ENCODE measurements at regions of chr3 and their contacts with region 1.

Region 1: GRCh38 chr3:38496131-38496910 is at the start of gene EXOG:
- DNase-seq: peak; percentile 93 to 97 (median 95)
- ATAC-seq: peak; percentile 95
- H3K4me3 ChIP-seq: peak within 1 kb of the TSS; percentile 88 to 96
- H3K4me3 Mint-ChIP-seq: peak within 1 kb of the TSS; percentile 97
- H3K27ac ChIP-seq: peak within 1 kb of the TSS; percentile 66 to 71
- H3K27ac Mint-ChIP-seq: peak within 1 kb of the TSS; percentile 91
- H3K4me1 ChIP-seq: peaks cover 14% of the 10 kb centered on the region
- H3K4me1 Mint-ChIP-seq: peaks cover 32% of the 10 kb centered on the region
- H3K27me3 ChIP-seq: no peaks in the 10 kb centered on the region
- H3K27me3 Mint-ChIP-seq: no peaks in the 10 kb centered on the region
- CTCF ChIP-seq: peak; percentile 92
- total RNA-seq, gene EXOG: 16.5 to 20.1 TPM

Region 2: DNA sequence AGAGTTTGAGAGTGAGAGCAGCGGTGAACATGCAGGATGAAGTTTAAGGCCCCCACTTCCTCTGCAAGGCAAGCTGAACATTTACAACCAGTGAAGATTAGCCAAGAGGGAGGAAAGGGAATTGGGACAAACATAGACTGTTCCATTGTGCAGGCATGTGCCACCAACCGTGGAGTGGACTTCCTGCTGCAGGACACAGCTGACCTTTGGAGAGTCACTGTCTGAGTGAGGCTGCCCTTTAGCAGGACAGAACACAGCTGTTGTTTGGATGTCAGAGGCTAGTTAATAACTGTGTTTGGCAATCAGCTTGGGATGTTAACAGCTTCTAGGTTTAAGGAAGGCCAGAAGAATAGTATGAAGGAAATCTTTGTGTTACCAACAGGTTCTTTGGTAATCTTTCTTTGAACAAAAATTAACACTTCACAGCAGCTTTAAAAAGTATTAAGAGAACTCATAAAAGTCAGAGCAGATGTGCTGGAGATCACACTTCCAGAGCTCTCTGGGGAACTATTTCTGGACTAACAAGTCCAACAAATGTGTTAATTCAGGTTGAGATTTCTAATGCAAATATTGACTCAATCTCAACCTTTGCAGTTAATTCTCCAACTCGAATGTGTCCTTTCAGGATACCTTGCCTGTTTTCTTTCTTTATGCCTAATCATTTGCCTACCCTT is 603.3 kb before region 1 on chr3:
- CTCF ChIA-PET with region 1: no interaction called
- POLR2A ChIA-PET with region 1: no interaction called
- intact Hi-C with region 1: no loop called
- DNase-seq: no peak
- ATAC-seq: no peak
- H3K4me3 ChIP-seq: no peak overlapping the region
- H3K4me3 Mint-ChIP-seq: no peak overlapping the region
- H3K27ac ChIP-seq: no peak overlapping the region
- H3K27ac Mint-ChIP-seq: no peak overlapping the region
- H3K4me1 ChIP-seq: no peaks in the 10 kb centered on the region
- H3K4me1 Mint-ChIP-seq: no peaks in the 10 kb centered on the region
- H3K27me3 ChIP-seq: no peaks in the 10 kb centered on the region
- H3K27me3 Mint-ChIP-seq: peaks cover 6% of the 10 kb centered on the region
- CTCF ChIP-seq: no peak

Region 3: DNA sequence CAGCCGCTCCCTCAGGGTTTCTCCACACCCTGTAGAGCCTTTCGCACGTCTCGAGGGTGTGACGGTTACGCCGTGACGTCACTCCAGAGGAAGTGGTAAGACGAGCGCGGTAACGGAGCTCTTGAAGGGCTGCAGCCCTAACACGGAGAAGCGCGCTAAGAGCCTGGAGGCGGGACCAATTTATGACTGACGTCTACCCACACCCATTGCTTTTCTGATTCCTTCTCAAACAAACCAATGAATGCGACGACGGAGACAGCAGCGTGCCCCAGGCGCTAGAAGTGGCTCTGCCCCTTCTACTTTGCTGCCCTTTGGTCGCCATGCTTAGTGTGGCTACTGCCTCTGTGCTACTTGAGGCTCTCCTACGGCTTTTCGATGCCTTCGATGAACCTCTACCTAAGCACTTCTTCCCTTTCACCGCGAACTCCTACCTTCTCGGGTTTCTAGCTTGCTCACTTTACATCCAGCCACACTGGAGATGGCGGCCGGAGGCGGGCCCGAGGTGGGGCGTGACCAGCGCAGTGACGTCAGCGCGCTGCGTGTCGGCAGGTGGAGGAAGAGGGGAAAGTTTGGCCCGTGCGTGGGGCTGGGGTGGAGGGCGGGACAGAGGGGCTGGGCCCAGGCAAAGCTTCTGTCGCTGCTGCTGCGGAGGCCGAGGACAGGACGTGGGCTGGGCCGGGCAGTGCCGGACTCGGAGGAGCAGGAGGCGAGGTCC is 331.2 kb before region 1 on chr3 and contains the start of gene OXSR1:
- CTCF ChIA-PET with region 1: no interaction called
- POLR2A ChIA-PET with region 1: interaction called, 4 read pairs
- intact Hi-C with region 1: loop called in 1 of 2 experiments (anchors 5 kb)
- DNase-seq: peak; percentile 91 to 100 (median 97)
- ATAC-seq: peak; percentile 89
- H3K4me3 ChIP-seq: peak within 1 kb of the TSS; percentile 76 to 84
- H3K4me3 Mint-ChIP-seq: peak within 1 kb of the TSS; percentile 91
- H3K27ac ChIP-seq: peak within 1 kb of the TSS; percentile 94 to 99
- H3K27ac Mint-ChIP-seq: peak within 1 kb of the TSS; percentile 100
- H3K4me1 ChIP-seq: peaks cover 23% of the 10 kb centered on the region
- H3K4me1 Mint-ChIP-seq: peaks cover 46% of the 10 kb centered on the region
- H3K27me3 ChIP-seq: no peaks in the 10 kb centered on the region
- H3K27me3 Mint-ChIP-seq: no peaks in the 10 kb centered on the region
- CTCF ChIP-seq: no peak
- total RNA-seq, gene OXSR1: 45.4 to 45.6 TPM

Region 4: GRCh38 chr3:38479431-38480092 is 16.8 kb before region 1 on chr3:
- CTCF ChIA-PET with region 1: interaction called, 14 read pairs
- POLR2A ChIA-PET with region 1: no interaction called
- intact Hi-C with region 1: no loop called
- DNase-seq: peak in 7 of 9 experiments; percentile 18 to 72 (median 48)
- ATAC-seq: peak; percentile 55
- H3K4me3 ChIP-seq: no peak overlapping the region
- H3K4me3 Mint-ChIP-seq: no peak overlapping the region
- H3K27ac ChIP-seq: no peak overlapping the region
- H3K27ac Mint-ChIP-seq: no peak overlapping the region
- H3K4me1 ChIP-seq: no peaks in the 10 kb centered on the region
- H3K4me1 Mint-ChIP-seq: peaks cover 2% of the 10 kb centered on the region
- H3K27me3 ChIP-seq: no peaks in the 10 kb centered on the region
- H3K27me3 Mint-ChIP-seq: no peaks in the 10 kb centered on the region
- CTCF ChIP-seq: peak; percentile 75

Region 5: GRCh38 chr3:38843898-38844297 is 347.6 kb after region 1 on chr3:
- CTCF ChIA-PET with region 1: no interaction called
- POLR2A ChIA-PET with region 1: no interaction called
- intact Hi-C with region 1: loop called in 1 of 2 experiments (anchors 10 kb)
- DNase-seq: peak in 1 of 9 experiments; percentile 16
- ATAC-seq: no peak
- H3K4me3 ChIP-seq: no peak overlapping the region
- H3K4me3 Mint-ChIP-seq: no peak overlapping the region
- H3K27ac ChIP-seq: no peak overlapping the region
- H3K27ac Mint-ChIP-seq: no peak overlapping the region
- H3K4me1 ChIP-seq: no peaks in the 10 kb centered on the region
- H3K4me1 Mint-ChIP-seq: no peaks in the 10 kb centered on the region
- H3K27me3 ChIP-seq: no peaks in the 10 kb centered on the region
- H3K27me3 Mint-ChIP-seq: peaks cover 24% of the 10 kb centered on the region
- CTCF ChIP-seq: no peak

Region 6: GRCh38 chr3:39051647-39052561 is 555.6 kb after region 1 on chr3 and contains the starts of genes SCN11A and WDR48:
- CTCF ChIA-PET with region 1: interaction called, 4 read pairs
- POLR2A ChIA-PET with region 1: no interaction called
- intact Hi-C with region 1: loop called in 1 of 2 experiments (anchors 1 kb)
- DNase-seq: peak; percentile 82 to 97 (median 94)
- ATAC-seq: peak; percentile 88
- H3K4me3 ChIP-seq: peak within 1 kb of the TSS; percentile 59 to 70
- H3K4me3 Mint-ChIP-seq: peak within 1 kb of the TSS; percentile 98
- H3K27ac ChIP-seq: peak within 1 kb of the TSS; percentile 83 to 91
- H3K27ac Mint-ChIP-seq: peak within 1 kb of the TSS; percentile 98
- H3K4me1 ChIP-seq: peaks cover 16% of the 10 kb centered on the region
- H3K4me1 Mint-ChIP-seq: peaks cover 67% of the 10 kb centered on the region
- H3K27me3 ChIP-seq: no peaks in the 10 kb centered on the region
- H3K27me3 Mint-ChIP-seq: no peaks in the 10 kb centered on the region
- CTCF ChIP-seq: no peak
- total RNA-seq, gene SCN11A: 0.08 to 0.11 TPM
- total RNA-seq, gene WDR48: 102 to 103 TPM

Measured in CD8-positive, alpha-beta T cell (primary cell).